ENCODE measurements at regions of chr15 and their contacts with region 1.

Region 1: DNA sequence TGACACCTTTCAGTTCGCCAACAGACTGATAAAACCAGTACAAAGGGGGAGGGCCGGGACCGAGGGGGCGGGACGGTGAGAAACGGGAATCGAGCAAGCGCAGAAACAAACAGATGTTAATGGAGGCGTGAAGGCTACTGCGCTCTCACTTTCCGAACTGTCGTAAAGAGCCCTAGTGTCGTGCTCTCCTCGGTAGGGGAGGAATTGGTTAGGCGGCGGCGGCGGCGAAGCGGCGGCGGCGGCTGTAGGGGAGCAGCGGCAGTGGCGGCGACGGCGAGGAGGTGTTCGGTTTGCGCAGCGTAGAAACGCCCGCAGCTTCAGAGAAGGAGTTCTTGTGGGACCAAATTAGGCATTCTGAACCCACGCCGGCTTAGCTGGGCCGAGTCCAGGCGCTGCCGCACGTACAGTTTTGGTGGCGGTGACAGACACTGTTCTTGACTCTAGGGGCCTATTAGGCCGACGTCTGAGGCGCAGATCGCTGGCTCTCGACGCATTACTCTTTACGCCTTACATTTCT is at the start of gene RNF111:
- DNase-seq: peak; percentile 77 to 96
- ATAC-seq: peak; percentile 94 to 98 (median 95)
- H3K4me3 ChIP-seq: peak within 1 kb of the TSS; percentile 79
- H3K4me3 Mint-ChIP-seq: peak within 1 kb of the TSS; percentile 98
- H3K27ac ChIP-seq: peak within 1 kb of the TSS; percentile 72
- H3K27ac Mint-ChIP-seq: peak within 1 kb of the TSS; percentile 87 to 96
- H3K4me1 ChIP-seq: peaks cover 3% of the 10 kb centered on the region
- H3K4me1 Mint-ChIP-seq: peaks cover 37% of the 10 kb centered on the region in 2 donors
- H3K27me3 ChIP-seq: no peaks in the 10 kb centered on the region
- H3K27me3 Mint-ChIP-seq: no peaks in the 10 kb centered on the region
- CTCF ChIP-seq: no peak
- total RNA-seq, gene RNF111: 39.4 to 53.1 (median 46.0) TPM

Region 2: DNA sequence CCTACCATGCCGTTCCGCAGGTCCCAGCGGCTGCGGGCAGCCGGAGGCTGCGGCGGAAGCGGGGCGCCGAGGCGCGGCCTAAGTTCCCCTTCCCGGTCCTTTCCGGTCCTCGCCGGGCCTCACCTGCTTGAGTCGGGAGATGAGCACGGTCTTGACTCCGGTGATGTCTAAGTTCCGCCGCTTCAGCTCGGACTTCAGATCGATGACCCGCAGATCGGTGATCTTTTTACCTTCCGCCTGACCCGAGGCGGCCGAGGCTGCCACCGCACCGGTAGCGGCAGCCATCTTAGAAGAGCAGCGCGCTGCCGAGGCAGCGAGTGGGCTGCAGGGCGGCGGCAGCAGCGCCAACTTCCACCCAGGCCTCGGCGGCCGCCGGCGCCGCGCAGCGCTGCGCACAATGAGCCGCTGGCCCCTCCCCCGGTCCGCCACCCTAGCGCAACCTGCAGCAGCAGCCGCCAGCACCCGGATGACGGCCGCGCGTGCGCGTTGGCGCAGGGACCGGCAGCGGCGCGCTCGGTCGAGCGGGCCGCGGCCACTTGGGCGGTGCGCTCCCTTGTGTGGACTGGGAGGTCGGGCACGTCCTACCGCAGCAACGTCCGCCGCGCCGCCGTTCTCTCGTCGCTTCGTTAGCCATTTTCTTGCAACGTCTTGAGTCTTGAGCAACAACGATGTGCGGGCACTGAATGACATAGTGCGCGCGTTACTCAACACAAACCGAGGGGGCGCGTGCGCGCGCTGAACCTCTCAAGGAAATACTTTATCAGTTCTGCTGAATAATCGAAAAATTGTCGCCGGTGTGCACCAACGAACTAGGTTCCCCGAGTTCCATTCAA is 54.0 kb before region 1 on chr15 and contains the start of gene SLTM:
- intact Hi-C with region 1: loop called (anchors 1 kb)
- DNase-seq: peak; percentile 88 to 98
- ATAC-seq: peak; percentile 88 to 97 (median 91)
- H3K4me3 ChIP-seq: peak within 1 kb of the TSS; percentile 98
- H3K4me3 Mint-ChIP-seq: peak within 1 kb of the TSS; percentile 97
- H3K27ac ChIP-seq: peak within 1 kb of the TSS; percentile 100
- H3K27ac Mint-ChIP-seq: peak within 1 kb of the TSS; percentile 96 to 97
- H3K4me1 ChIP-seq: peaks cover 8% of the 10 kb centered on the region
- H3K4me1 Mint-ChIP-seq: peaks cover 26 to 27% of the 10 kb centered on the region in 2 donors
- H3K27me3 ChIP-seq: no peaks in the 10 kb centered on the region
- H3K27me3 Mint-ChIP-seq: peaks cover 0 to 3% of the 10 kb centered on the region in 2 donors
- CTCF ChIP-seq: peak; percentile 46
- total RNA-seq, gene SLTM: 206 to 226 (median 223) TPM

Region 3: GRCh38 chr15:59020322-59020721 is 32.8 kb after region 1 on chr15:
- intact Hi-C with region 1: no loop called
- DNase-seq: no peak
- ATAC-seq: no peak
- H3K4me3 ChIP-seq: no peak overlapping the region
- H3K4me3 Mint-ChIP-seq: no peak overlapping the region
- H3K27ac ChIP-seq: no peak overlapping the region
- H3K27ac Mint-ChIP-seq: no peak overlapping the region
- H3K4me1 ChIP-seq: no peaks in the 10 kb centered on the region
- H3K4me1 Mint-ChIP-seq: peaks cover 0 to 5% of the 10 kb centered on the region in 2 donors
- H3K27me3 ChIP-seq: no peaks in the 10 kb centered on the region
- H3K27me3 Mint-ChIP-seq: no peaks in the 10 kb centered on the region
- CTCF ChIP-seq: no peak

Region 4: DNA sequence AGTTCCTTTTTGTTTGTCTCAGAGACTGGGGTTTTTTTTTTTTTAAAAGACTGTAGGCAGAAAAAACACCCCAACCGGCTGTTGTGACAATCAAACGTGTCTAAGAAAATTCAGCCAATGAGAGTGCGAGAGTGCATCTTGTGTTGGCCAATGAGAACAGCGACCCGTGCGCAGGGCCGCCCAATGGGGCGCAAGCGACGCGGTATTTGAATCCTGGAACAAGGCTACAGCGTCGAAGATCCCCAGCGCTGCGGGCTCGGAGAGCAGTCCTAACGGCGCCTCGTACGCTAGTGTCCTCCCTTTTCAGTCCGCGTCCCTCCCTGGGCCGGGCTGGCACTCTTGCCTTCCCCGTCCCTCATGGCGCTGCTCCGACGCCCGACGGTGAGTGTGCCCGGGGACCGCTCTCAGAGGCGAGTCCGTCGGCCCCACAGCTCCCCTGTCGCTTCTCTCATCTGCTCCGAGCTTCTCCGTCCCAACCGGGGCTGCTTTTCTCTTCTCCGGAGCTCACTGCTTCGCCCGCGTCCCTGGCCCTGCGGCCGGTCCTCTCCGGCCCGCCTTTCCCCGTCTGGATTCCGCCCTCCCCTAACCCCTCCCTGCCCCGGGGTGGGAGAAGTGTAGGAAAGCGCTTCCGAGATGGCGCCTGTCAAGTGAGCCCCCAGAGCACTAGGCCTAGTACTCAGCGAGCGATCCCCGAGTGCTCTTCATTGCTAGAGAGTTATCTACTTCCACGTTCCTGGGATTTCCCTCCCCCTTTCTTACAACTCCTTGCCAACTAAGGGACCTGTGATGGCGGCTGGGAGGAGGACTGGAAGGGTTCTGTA is 117.6 kb after region 1 on chr15 and contains the start of gene CCNB2:
- intact Hi-C with region 1: loop called (anchors 10 kb)
- DNase-seq: peak; percentile 80 to 95
- ATAC-seq: peak; percentile 99 to 100 (median 100)
- H3K4me3 ChIP-seq: peak within 1 kb of the TSS; percentile 61
- H3K4me3 Mint-ChIP-seq: peak within 1 kb of the TSS; percentile 97
- H3K27ac ChIP-seq: peak within 1 kb of the TSS; percentile 57
- H3K27ac Mint-ChIP-seq: peak within 1 kb of the TSS; percentile 94 to 95
- H3K4me1 ChIP-seq: peaks cover 5% of the 10 kb centered on the region
- H3K4me1 Mint-ChIP-seq: peaks cover 8 to 9% of the 10 kb centered on the region in 2 donors
- H3K27me3 ChIP-seq: no peaks in the 10 kb centered on the region
- H3K27me3 Mint-ChIP-seq: no peaks in the 10 kb centered on the region
- CTCF ChIP-seq: no peak
- total RNA-seq, gene CCNB2: 0.47 to 1.4 (median 1.1) TPM

Region 5: DNA sequence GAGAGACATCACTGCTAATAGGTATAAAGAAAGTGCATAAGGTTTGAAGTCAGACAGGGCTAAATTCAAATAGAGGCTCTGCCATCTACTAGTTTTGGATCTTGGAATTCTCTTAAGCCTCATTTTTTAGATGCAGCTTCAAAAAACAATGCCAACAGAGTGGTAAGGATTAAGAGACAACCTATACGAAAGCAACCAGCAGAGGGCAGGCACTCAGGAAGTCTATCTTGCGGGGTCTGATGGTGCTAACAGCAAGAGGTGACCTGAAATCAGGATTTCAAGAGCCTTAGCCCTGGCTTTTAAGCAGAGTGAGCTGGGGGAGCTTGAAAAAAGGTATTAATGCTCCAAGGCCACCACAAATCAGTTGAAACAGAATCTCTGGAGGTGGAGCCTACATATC is 259.8 kb after region 1 on chr15:
- intact Hi-C with region 1: loop called (anchors 10 kb)
- DNase-seq: peak; percentile 42 to 73
- ATAC-seq: peak; percentile 73 to 93 (median 90)
- H3K4me3 ChIP-seq: no peak overlapping the region
- H3K4me3 Mint-ChIP-seq: peak overlapping the region; percentile 6
- H3K27ac ChIP-seq: no peak overlapping the region
- H3K27ac Mint-ChIP-seq: no peak overlapping the region
- H3K4me1 ChIP-seq: peaks cover 12% of the 10 kb centered on the region
- H3K4me1 Mint-ChIP-seq: peaks cover 6 to 13% of the 10 kb centered on the region in 2 donors
- H3K27me3 ChIP-seq: no peaks in the 10 kb centered on the region
- H3K27me3 Mint-ChIP-seq: no peaks in the 10 kb centered on the region
- CTCF ChIP-seq: peak; percentile 72

Region 6: DNA sequence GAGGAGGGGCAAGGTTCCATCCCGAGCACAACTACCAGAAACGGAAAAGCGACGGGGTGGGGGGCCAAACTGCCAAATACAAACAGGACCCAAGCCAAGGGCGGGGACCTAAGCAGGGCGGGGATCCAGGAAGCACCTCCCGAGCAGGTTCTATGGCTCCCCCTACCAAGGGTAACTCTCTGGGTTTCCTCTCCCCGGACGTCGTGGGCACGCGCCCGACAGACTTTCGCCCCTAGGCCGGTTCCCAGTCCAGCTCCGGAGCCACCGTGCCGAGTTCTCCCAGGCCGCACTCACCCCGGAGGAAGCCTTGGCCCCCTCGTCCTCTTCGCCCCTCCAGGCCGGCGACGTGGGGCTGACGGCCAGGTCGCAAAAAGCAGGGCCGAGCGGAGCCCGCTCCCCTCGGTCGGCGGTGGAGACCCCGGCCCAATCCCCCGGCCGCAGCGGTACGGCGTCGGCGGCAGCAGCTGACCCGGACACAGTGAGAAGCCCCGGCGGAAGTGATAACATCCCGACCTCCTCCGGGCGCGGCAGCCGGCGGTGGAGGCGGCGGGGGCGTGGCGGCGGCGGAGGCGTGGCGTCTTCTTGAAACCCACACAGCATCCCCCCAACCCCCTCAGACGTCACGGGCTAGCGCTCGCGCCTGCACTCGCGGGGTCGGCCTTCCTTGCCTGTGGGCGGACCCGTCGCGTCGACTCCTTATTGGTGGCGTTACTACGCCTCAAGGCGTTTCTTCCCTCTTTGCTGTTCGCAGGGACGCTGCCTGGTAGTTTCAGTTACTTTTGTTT is 701.5 kb after region 1 on chr15 and contains the start of gene BNIP2:
- intact Hi-C with region 1: loop called (anchors 5 kb)
- DNase-seq: peak; percentile 99 to 100
- ATAC-seq: peak; percentile 87 to 97 (median 89)
- H3K4me3 ChIP-seq: peak within 1 kb of the TSS; percentile 93
- H3K4me3 Mint-ChIP-seq: peak within 1 kb of the TSS; percentile 94
- H3K27ac ChIP-seq: peak within 1 kb of the TSS; percentile 99
- H3K27ac Mint-ChIP-seq: peak within 1 kb of the TSS; percentile 91 to 98
- H3K4me1 ChIP-seq: peaks cover 22% of the 10 kb centered on the region
- H3K4me1 Mint-ChIP-seq: peaks cover 34 to 35% of the 10 kb centered on the region in 2 donors
- H3K27me3 ChIP-seq: no peaks in the 10 kb centered on the region
- H3K27me3 Mint-ChIP-seq: no peaks in the 10 kb centered on the region
- CTCF ChIP-seq: no peak
- total RNA-seq, gene BNIP2: 103 to 118 (median 105) TPM

Measured in natural killer cell (primary cell).